Panc1 (cell line): ENCODE measurements at regions of chr17 and their contacts with region 1.

Region 1: DNA sequence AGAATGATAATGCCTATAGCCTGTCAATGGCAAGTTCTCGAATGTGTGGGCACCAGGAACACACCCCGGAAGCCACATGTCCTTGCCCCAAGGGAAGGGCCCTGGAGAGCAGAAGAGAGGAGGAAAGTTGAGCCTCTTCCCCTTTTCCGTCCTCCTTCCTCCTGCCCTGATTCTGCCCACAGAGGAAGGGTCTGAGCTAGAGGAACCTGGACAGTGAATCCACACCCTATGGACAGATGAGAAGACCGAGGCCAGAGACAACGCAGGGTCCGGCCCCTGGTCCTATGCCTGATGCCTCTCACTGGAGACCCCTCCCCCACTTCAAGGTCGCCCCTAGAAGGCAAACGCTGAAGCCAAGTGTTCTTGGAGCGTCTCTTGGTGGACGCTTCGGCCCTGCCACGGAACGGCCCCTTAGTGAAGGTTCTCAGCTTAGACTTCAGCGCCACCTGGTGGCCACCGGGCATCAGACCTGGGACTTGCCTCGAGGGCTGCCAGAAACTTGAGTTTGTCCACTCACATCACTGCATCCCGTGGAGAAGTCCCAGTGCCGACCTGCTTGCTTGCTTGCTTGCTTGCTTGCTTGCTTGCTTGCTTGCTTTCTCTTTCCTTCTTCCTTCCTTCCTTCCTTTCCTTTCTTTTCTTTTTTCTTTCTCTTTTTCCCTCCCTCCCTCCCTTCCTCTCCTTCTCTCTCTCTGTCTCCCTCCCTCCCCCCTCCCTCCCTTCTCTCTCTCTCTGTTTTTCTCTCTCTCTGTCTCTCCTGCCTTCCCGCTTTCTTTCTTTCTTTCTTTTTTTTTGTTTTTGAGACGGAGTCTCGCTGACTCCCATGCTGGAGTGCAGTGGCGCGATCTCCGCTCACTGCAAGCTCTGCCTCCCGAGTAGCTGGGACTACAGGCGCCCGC is 20.6 kb upstream of the SPNS3 start:
- DNase-seq: peak; percentile 66
- ATAC-seq: peak; percentile 99
- H3K4me3 ChIP-seq: peak overlapping the region in 1 of 2 experiments; percentile 16; a peak in 1 of 4 replicates
- H3K27ac ChIP-seq: no peak overlapping the region
- H3K4me1 ChIP-seq: no peaks in the 10 kb centered on the region
- H3K27me3 ChIP-seq: no peaks in the 10 kb centered on the region
- CTCF ChIP-seq: peak; percentile 91

Region 2: GRCh38 chr17:4199818-4200402 is 213.3 kb before region 1 on chr17:
- CTCF ChIA-PET with region 1: interaction called, 7 read pairs
- POLR2A ChIA-PET with region 1: no interaction called
- in situ Hi-C with region 1: no loop called
- intact Hi-C with region 1: loop called (anchors 5 kb)
- DNase-seq: peak; percentile 30
- ATAC-seq: no peak
- H3K4me3 ChIP-seq: no peak overlapping the region
- H3K27ac ChIP-seq: no peak overlapping the region
- H3K4me1 ChIP-seq: no peaks in the 10 kb centered on the region
- H3K27me3 ChIP-seq: no peaks in the 10 kb centered on the region
- CTCF ChIP-seq: peak; percentile 86